ENCODE measurements at regions of chr3 and their contacts with region 1.

Region 1: GRCh38 chr3:155701882-155702465 is 42.9 kb downstream of the PLCH1 start:
- DNase-seq: peak in 1 of 35 experiments; percentile 55
- ATAC-seq: no peak
- H3K4me3 ChIP-seq: no peak overlapping the region
- H3K4me3 Mint-ChIP-seq: no peak overlapping the region
- H3K27ac ChIP-seq: no peak overlapping the region
- H3K27ac Mint-ChIP-seq: no peak overlapping the region
- H3K4me1 ChIP-seq: no peaks in the 10 kb centered on the region
- H3K4me1 Mint-ChIP-seq: no peaks in the 10 kb centered on the region
- H3K27me3 ChIP-seq: no peaks in the 10 kb centered on the region
- H3K27me3 Mint-ChIP-seq: peaks cover 3 to 9% of the 10 kb centered on the region in 2 donors

Region 2: GRCh38 chr3:155352900-155353490 is 349.0 kb before region 1 on chr3:
- CTCF ChIA-PET with region 1: interaction called, 10 to 43 read pairs
- POLR2A ChIA-PET with region 1: no interaction called
- DNase-seq: peak in 1 of 35 experiments; percentile 29
- ATAC-seq: no peak
- H3K4me3 ChIP-seq: no peak overlapping the region
- H3K4me3 Mint-ChIP-seq: no peak overlapping the region
- H3K27ac ChIP-seq: no peak overlapping the region
- H3K27ac Mint-ChIP-seq: no peak overlapping the region
- H3K4me1 ChIP-seq: no peaks in the 10 kb centered on the region
- H3K4me1 Mint-ChIP-seq: no peaks in the 10 kb centered on the region
- H3K27me3 ChIP-seq: peaks cover 0 to 3% of the 10 kb centered on the region in 2 experiments
- H3K27me3 Mint-ChIP-seq: peaks cover 0 to 7% of the 10 kb centered on the region in 2 donors

Region 3: GRCh38 chr3:155631323-155632019 is 70.5 kb before region 1 on chr3:
- CTCF ChIA-PET with region 1: no interaction called
- POLR2A ChIA-PET with region 1: no interaction called
- DNase-seq: no peak
- ATAC-seq: no peak
- H3K4me3 ChIP-seq: no peak overlapping the region
- H3K4me3 Mint-ChIP-seq: no peak overlapping the region
- H3K27ac ChIP-seq: no peak overlapping the region
- H3K27ac Mint-ChIP-seq: no peak overlapping the region
- H3K4me1 ChIP-seq: no peaks in the 10 kb centered on the region
- H3K4me1 Mint-ChIP-seq: no peaks in the 10 kb centered on the region
- H3K27me3 ChIP-seq: no peaks in the 10 kb centered on the region
- H3K27me3 Mint-ChIP-seq: peaks cover 0 to 3% of the 10 kb centered on the region in 2 donors

Region 4: DNA sequence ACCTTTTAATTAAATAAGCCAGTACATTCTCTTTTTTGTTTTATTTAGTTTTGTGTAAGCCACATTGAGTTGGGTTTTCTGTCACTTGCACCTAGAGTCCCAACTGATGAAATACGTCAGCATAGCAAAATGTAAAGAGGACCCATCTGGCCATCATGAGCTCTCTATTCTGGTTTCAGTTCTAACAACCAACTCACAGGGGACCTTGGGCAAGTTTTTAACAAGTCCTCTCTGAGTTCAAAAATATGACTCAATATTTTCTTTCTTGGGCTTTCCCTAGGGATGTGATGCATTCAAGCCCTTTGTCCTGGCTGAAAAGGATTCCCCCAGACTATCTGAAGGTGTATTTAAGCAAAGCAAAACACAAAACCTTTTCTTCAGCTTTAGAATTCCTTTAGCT is 10.0 kb after region 1 on chr3:
- CTCF ChIA-PET with region 1: interaction called, 4 to 14 read pairs
- POLR2A ChIA-PET with region 1: interaction called in 1 of 2 experiments, 3 read pairs
- DNase-seq: no peak
- ATAC-seq: no peak
- H3K4me3 ChIP-seq: no peak overlapping the region
- H3K4me3 Mint-ChIP-seq: no peak overlapping the region
- H3K27ac ChIP-seq: no peak overlapping the region
- H3K27ac Mint-ChIP-seq: no peak overlapping the region
- H3K4me1 ChIP-seq: no peaks in the 10 kb centered on the region
- H3K4me1 Mint-ChIP-seq: no peaks in the 10 kb centered on the region
- H3K27me3 ChIP-seq: no peaks in the 10 kb centered on the region
- H3K27me3 Mint-ChIP-seq: no peaks in the 10 kb centered on the region

Region 5: GRCh38 chr3:155766206-155766605 is 64.2 kb after region 1 on chr3:
- CTCF ChIA-PET with region 1: no interaction called
- POLR2A ChIA-PET with region 1: no interaction called
- DNase-seq: no peak
- ATAC-seq: no peak
- H3K4me3 ChIP-seq: no peak overlapping the region
- H3K4me3 Mint-ChIP-seq: no peak overlapping the region
- H3K27ac ChIP-seq: no peak overlapping the region
- H3K27ac Mint-ChIP-seq: no peak overlapping the region
- H3K4me1 ChIP-seq: no peaks in the 10 kb centered on the region
- H3K4me1 Mint-ChIP-seq: no peaks in the 10 kb centered on the region
- H3K27me3 ChIP-seq: no peaks in the 10 kb centered on the region
- H3K27me3 Mint-ChIP-seq: no peaks in the 10 kb centered on the region

Region 6: DNA sequence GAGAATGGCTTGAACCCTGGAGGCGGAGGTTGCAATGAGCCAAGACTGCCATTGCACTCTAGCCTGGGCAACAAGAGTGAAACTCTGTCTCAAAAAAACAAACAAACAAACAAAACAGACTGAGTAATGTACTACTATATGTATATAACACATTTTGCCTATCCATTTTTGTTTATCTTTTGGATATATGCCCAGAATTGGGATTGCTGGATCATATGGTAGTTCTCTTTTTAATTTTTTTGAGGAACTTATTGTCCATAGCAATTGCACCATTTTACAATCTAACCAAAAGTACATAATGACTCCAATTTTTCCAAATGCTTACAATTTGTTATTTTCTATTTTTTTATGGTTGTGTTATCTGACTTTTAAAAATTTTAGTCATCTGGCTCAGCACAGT is 215.8 kb after region 1 on chr3:
- CTCF ChIA-PET with region 1: no interaction called
- POLR2A ChIA-PET with region 1: no interaction called
- DNase-seq: no peak
- ATAC-seq: no peak
- H3K4me3 ChIP-seq: no peak overlapping the region
- H3K4me3 Mint-ChIP-seq: no peak overlapping the region
- H3K27ac ChIP-seq: no peak overlapping the region
- H3K27ac Mint-ChIP-seq: no peak overlapping the region
- H3K4me1 ChIP-seq: no peaks in the 10 kb centered on the region
- H3K4me1 Mint-ChIP-seq: no peaks in the 10 kb centered on the region
- H3K27me3 ChIP-seq: no peaks in the 10 kb centered on the region
- H3K27me3 Mint-ChIP-seq: no peaks in the 10 kb centered on the region